Psoas muscle (tissue), 8 donors: ENCODE measurements at regions of chr13 and their contacts with region 1.

Region 1: DNA sequence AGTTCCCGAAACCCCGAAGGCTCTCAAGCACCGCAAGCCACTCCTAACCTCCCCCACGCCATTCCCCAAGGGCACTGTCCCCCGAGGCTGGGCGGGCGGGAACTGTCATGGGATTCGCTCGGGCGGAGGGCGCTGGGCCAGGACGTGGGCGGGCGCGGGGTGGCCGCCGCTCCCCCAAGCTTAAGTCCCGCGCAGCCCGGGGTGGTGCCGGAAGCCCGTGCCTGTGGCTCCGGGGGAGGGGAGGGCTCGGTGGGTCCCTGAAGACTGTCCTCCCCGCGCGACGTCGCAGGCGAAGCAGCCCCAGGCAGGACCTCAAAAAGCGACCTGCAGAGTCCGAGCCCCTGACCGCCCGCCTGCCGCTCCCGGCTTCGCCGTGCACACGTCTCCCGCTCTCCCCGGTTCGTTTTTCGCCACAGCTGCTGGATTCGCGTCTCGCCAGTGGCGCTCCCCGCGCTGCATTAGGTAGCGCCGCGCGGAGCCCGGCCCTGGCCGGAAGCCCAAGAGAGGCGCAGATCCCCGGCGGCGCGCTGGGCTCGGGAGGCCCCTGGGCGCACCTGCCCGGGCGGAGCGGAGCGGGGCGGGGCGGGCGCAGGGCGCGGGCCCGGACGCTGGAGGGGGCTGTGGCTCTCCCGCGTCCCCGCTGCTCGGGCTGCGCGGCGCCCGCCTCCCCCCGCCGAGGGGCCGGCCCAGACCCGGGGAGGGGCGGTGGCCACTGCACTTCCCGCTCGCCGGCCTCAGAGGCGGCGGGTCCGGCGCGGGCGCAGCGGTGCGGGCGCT is at the start of gene FARP1:
- DNase-seq: peak; percentile 76 to 81
- ATAC-seq: peak; percentile 92 to 94 (median 93)
- H3K4me3 ChIP-seq: peak within 1 kb of the TSS; percentile 75
- H3K27ac ChIP-seq: peak within 1 kb of the TSS; percentile 65
- H3K4me1 ChIP-seq: peaks cover 9% of the 10 kb centered on the region
- H3K27me3 ChIP-seq: peaks cover 0 to 16% (median 0%) of the 10 kb centered on the region in 3 donors
- CTCF ChIP-seq: peak; percentile 47
- total RNA-seq, gene FARP1: 9.2 to 19.4 (median 13.0) TPM

Region 2: GRCh38 chr13:98397221-98397620 is 254.7 kb after region 1 on chr13:
- intact Hi-C with region 1: loop called in 1 of 2 experiments (anchors 10 kb)
- DNase-seq: no peak
- ATAC-seq: peak in 3 of 4 donors; percentile 45 to 63 (median 49)
- H3K4me3 ChIP-seq: no peak overlapping the region
- H3K27ac ChIP-seq: no peak overlapping the region
- H3K4me1 ChIP-seq: peaks cover 3% of the 10 kb centered on the region
- H3K27me3 ChIP-seq: no peaks in the 10 kb centered on the region
- CTCF ChIP-seq: peak; percentile 29

Region 3: DNA sequence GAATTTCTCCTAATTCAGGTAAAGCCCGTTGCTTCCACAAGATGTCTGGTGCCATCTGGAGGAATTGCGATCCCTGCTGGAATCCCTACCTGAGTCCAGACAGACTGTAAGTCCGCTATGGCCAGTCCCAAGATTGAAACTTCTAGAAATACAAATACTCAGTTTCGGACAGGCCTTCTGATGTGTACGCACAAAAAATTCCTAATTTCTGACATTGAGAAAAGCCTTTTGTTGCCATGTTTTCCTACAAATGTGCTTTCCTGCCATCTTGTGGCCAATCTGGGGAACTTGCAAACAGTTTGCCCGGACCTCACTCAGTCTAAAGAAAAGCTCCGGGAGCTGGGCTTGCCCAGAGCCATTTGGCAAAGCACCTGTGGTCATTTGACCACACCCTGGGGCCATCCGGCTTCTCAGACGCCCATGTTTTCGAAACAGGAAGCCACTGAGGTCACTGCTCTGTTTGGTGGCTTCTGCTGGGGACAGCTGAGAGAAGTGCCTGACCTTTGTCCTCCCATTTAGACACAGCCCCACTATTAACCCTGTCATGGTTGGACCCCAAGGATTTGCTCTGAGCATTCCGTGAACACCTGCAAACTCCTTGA is 530.5 kb after region 1 on chr13:
- intact Hi-C with region 1: loop called in 1 of 2 experiments (anchors 10 kb)
- DNase-seq: peak; percentile 66 to 83
- ATAC-seq: peak; percentile 80 to 97 (median 92)
- H3K4me3 ChIP-seq: no peak overlapping the region
- H3K27ac ChIP-seq: no peak overlapping the region
- H3K4me1 ChIP-seq: no peaks in the 10 kb centered on the region
- H3K27me3 ChIP-seq: peaks cover 0 to 1% (median 0%) of the 10 kb centered on the region in 3 donors
- CTCF ChIP-seq: peak; percentile 91